Posterior vena cava (tissue), 2 donors: ENCODE measurements at regions of chr19 and their contacts with region 1.

Region 1: GRCh38 chr19:54159352-54160181 is at the start of gene LENG1:
- DNase-seq: peak; percentile 100
- total RNA-seq, gene LENG1: 4.7 to 6.2 TPM

Region 2: GRCh38 chr19:53912653-53913052 is 246.9 kb before region 1 on chr19:
- intact Hi-C with region 1: loop called in 1 of 2 experiments (anchors 10 kb)
- DNase-seq: no peak